T-cell (primary cell): ENCODE measurements at regions of chr3 and their contacts with region 1.

Region 1: DNA sequence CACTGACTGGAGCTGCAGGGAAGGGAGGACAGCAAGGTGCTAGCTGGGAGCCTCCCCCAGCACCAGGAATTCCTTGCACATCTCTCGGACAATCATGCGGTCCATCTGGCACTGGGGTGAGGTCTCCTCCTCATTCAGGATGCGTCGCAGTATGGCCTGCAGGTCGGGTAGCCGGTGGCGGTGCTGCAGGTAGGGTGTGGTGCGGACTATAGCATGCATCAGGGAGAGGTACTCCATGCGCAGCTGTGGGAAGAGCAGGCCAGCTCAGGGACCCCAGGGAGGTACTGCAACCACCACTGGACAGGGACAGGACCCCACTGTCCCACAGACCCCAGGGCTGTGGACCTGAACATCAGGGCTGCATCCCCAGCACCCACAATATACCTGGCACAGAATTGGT is 11.2 kb downstream of the NCKIPSD start:
- DNase-seq: no peak
- ATAC-seq: no peak
- H3K4me3 ChIP-seq: no peak overlapping the region
- H3K4me3 Mint-ChIP-seq: no peak overlapping the region
- H3K27ac ChIP-seq: no peak overlapping the region
- H3K27ac Mint-ChIP-seq: no peak overlapping the region
- H3K4me1 ChIP-seq: peaks cover 0 to 3% of the 10 kb centered on the region in 2 experiments
- H3K4me1 Mint-ChIP-seq: peaks cover 3 to 6% (median 3%) of the 10 kb centered on the region in 3 donors
- H3K27me3 ChIP-seq: no peaks in the 10 kb centered on the region
- H3K27me3 Mint-ChIP-seq: no peaks in the 10 kb centered on the region

Region 2: DNA sequence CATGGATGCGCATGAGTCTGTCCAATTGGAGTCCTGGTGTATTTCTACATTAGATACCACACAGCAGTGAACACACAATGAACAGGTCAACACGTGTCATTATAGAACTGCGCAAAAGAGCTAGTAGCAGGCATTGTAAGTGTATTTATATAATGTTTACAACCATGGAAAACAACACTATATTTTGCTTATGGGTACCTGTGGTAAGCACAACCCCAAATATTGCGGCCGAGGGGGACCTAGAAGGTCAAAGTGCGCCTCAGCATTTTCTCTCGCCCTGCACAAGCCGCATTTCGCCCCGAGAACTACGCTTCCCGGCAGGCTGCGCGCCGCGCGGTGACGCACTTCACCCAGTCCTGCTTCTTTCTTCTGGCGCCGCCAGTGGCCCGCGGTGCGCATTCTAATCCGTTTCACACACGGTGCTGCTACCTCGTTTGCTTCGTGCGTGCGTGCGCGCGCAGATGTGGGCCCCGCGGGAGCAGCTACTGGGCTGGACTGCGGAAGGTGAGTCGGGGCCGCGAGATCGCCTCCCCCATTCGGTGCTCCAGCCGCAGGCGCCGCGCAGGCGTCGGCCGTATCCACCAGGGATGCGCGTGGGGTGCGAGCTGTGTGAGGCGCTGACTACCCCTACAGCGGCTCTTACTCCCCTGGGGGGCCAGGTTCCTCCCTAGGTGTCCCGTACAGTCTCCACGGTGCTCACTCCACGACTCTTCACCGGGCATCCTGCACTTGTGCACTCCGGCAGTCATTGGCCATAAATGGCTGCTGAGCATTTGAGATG is 433.6 kb before region 1 on chr3 and contains the start of gene ZNF589:
- CTCF ChIA-PET with region 1: no interaction called
- POLR2A ChIA-PET with region 1: interaction called in 1 of 2 experiments, 11 read pairs
- DNase-seq: peak; percentile 82 to 99 (median 93)
- ATAC-seq: peak; percentile 97 to 99 (median 99)
- H3K4me3 ChIP-seq: peak within 1 kb of the TSS; percentile 85 to 98
- H3K4me3 Mint-ChIP-seq: peak within 1 kb of the TSS; percentile 85 to 92 (median 90)
- H3K27ac ChIP-seq: peak within 1 kb of the TSS; percentile 82
- H3K27ac Mint-ChIP-seq: peak within 1 kb of the TSS; percentile 90 to 91
- H3K4me1 ChIP-seq: peaks cover 2 to 32% of the 10 kb centered on the region in 2 experiments
- H3K4me1 Mint-ChIP-seq: peaks cover 19 to 31% (median 22%) of the 10 kb centered on the region in 3 donors
- H3K27me3 ChIP-seq: no peaks in the 10 kb centered on the region
- H3K27me3 Mint-ChIP-seq: no peaks in the 10 kb centered on the region
- total RNA-seq, gene ZNF589: 34.4 to 47.6 (median 44.2) TPM